Prostate gland (tissue), 2 donors: ENCODE measurements at regions of chr11 and their contacts with region 1.

Region 1: GRCh38 chr11:125164422-125165110 is at the start of gene PKNOX2:
- DNase-seq: peak; percentile 69
- H3K4me3 ChIP-seq: peak within 1 kb of the TSS; percentile 60 to 69
- H3K27ac ChIP-seq: peak within 1 kb of the TSS; percentile 85 to 88
- H3K4me1 ChIP-seq: peaks cover 10% of the 10 kb centered on the region
- H3K27me3 ChIP-seq: no peaks in the 10 kb centered on the region
- CTCF ChIP-seq: peak; percentile 41 to 76 (median 58)
- POLR2A ChIP-seq: peak; percentile 6
- total RNA-seq, gene PKNOX2: 12.3 to 14.7 TPM

Region 2: DNA sequence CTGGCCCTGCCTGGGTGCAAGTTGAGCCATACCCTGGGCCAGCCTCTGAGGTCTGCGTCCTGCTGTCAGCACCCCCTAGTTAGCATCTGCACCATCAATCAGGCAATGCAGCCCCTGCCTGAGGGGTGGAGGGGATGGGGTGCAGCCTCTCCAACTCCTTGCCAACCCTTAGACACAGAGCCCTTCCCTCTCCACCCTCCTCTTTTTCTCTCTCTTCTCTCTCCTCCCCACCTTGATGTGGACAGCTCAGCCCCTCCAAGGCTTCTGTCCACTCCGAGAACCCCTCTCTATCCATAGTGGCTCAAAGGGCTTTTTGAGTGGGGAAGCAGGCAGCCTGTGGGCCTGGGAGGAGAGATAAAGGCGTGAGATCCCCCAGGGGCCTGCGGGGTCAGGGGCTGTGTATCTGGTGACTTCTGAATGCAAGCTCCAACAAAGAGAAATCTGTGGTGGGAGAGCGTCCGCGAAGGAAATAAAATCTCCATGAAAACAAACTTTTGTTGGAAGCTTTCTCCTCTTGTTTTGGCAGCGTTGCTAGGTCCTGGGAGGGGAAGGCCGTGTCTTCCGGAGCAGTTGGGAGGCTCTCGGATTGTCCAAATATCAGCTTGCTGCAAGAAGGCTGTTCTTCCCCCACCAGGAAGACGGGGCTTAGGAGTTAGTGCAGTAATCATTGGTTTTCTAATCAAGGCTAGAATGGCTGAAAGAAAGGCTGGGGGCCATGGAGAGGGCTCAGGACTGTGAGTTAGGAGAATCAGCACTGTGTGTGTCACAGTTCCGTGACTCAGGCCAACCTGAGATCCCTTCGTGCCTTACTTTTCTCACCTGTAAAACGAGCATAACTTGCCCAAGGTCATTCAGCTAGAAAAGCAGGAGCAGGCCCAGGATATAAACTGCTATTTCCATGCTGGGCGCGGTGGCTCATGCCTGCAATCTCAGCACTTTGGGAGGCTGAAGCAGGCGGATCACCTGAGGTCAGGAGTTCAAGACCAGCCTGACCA is 50.3 kb after region 1 on chr11:
- intact Hi-C with region 1: loop called (anchors 5 kb)
- DNase-seq: no peak
- H3K4me3 ChIP-seq: no peak overlapping the region
- H3K27ac ChIP-seq: peak overlapping the region in 1 of 2 donors; percentile 21
- H3K4me1 ChIP-seq: peaks cover 6% of the 10 kb centered on the region
- H3K27me3 ChIP-seq: no peaks in the 10 kb centered on the region
- CTCF ChIP-seq: no peak
- POLR2A ChIP-seq: no peak

Region 3: GRCh38 chr11:125287491-125288210 is 123.1 kb after region 1 on chr11:
- intact Hi-C with region 1: loop called (anchors 10 kb)
- DNase-seq: no peak
- H3K4me3 ChIP-seq: no peak overlapping the region
- H3K27ac ChIP-seq: peak overlapping the region in 1 of 2 donors; percentile 1
- H3K4me1 ChIP-seq: no peaks in the 10 kb centered on the region
- H3K27me3 ChIP-seq: no peaks in the 10 kb centered on the region
- CTCF ChIP-seq: no peak
- POLR2A ChIP-seq: no peak

Region 4: DNA sequence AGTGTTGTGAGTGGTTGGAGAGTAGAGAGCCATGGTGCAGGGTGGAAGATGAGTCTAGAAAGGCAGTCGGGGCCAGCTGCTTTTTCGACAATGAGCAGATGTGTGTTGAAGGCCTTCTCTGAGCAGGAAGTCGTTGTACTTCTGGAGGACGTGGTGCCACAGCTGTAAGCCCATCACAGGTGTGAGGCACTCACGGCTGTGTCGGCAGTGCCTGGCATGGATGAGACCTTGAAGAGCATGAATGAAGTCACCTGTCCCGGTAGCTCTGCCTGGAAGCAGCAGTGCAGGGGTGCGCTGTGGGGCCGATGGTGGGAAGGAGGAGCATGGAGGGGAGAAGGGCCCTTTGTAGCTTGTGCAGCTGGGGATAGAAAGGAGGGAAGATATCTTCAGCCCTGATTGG is 165.2 kb after region 1 on chr11:
- intact Hi-C with region 1: no loop called
- DNase-seq: no peak
- H3K4me3 ChIP-seq: no peak overlapping the region
- H3K27ac ChIP-seq: no peak overlapping the region
- H3K4me1 ChIP-seq: no peaks in the 10 kb centered on the region
- H3K27me3 ChIP-seq: no peaks in the 10 kb centered on the region
- CTCF ChIP-seq: no peak
- POLR2A ChIP-seq: no peak

Region 5: GRCh38 chr11:125345421-125346178 is 181.0 kb after region 1 on chr11:
- intact Hi-C with region 1: loop called (anchors 2 kb)
- DNase-seq: peak; percentile 62
- H3K4me3 ChIP-seq: no peak overlapping the region
- H3K27ac ChIP-seq: peak overlapping the region; percentile 21 to 46
- H3K4me1 ChIP-seq: peaks cover 5% of the 10 kb centered on the region
- H3K27me3 ChIP-seq: no peaks in the 10 kb centered on the region
- CTCF ChIP-seq: peak; percentile 80 to 92 (median 87)
- POLR2A ChIP-seq: no peak

Region 6: GRCh38 chr11:125404776-125405435 is 240.3 kb after region 1 on chr11:
- intact Hi-C with region 1: loop called (anchors 2 kb)
- DNase-seq: peak; percentile 57
- H3K4me3 ChIP-seq: no peak overlapping the region
- H3K27ac ChIP-seq: peak overlapping the region; percentile 10 to 11
- H3K4me1 ChIP-seq: no peaks in the 10 kb centered on the region
- H3K27me3 ChIP-seq: no peaks in the 10 kb centered on the region
- CTCF ChIP-seq: peak; percentile 72 to 91 (median 86)
- POLR2A ChIP-seq: no peak